Dorsolateral prefrontal cortex (tissue), 120 donors: ENCODE measurements at regions of chr15 and their contacts with region 1.

Region 1: GRCh38 chr15:33226559-33227181 is 32.2 kb upstream of the FMN1 start:
- DNase-seq: peak in 1 of 10 donors; percentile 11
- H3K4me3 ChIP-seq: no peak overlapping the region
- H3K27ac ChIP-seq: no peak overlapping the region
- H3K27me3 ChIP-seq: no peaks in the 10 kb centered on the region
- CTCF ChIP-seq: peak in 36 of 56 donors; percentile 7 to 54 (median 31)

Region 2: DNA sequence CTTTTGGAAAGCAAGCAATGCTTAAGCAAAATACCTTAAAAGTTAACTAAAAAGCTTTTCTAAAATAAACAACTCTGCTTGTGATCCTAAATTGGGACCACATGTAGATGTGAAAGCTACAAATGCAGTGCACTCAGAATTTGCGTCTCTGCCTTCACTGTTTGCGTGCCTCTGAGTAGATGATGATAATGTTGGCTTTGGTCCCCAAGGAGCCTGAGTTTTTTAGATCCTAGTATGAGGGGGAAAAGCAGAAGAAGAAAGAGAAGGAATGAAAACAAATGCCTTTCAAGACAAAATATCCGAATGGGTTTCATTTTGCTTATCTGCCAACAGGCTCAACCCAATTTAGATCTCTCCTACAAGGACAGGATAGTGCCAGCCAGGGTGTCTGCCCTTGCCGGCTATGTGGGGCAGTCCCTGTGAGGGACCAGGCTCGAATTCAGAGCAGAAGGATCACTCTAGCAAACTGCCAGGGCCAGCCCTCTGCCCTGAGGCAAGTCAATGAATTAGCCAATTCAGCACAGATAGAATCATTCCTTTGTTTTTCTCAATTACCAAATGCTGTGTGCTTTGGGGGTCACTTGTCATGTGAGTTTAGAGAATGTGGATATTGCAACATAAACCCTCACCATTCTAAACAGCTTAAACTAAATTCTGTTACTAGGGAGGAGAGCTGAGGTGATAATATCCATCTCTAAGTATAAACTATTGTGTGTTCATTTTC is 556.6 kb before region 1 on chr15:
- intact Hi-C with region 1: no loop called
- DNase-seq: peak in 9 of 10 donors; percentile 59 to 87 (median 78)
- H3K4me3 ChIP-seq: peak overlapping the region in 40 of 59 donors; percentile 0 to 55 (median 22)
- H3K27ac ChIP-seq: peak overlapping the region in 58 of 59 donors; percentile 61 to 99 (median 94)
- H3K27me3 ChIP-seq: no peaks in the 10 kb centered on the region
- CTCF ChIP-seq: peak in 10 of 56 donors; percentile 5 to 21 (median 16)

Region 3: DNA sequence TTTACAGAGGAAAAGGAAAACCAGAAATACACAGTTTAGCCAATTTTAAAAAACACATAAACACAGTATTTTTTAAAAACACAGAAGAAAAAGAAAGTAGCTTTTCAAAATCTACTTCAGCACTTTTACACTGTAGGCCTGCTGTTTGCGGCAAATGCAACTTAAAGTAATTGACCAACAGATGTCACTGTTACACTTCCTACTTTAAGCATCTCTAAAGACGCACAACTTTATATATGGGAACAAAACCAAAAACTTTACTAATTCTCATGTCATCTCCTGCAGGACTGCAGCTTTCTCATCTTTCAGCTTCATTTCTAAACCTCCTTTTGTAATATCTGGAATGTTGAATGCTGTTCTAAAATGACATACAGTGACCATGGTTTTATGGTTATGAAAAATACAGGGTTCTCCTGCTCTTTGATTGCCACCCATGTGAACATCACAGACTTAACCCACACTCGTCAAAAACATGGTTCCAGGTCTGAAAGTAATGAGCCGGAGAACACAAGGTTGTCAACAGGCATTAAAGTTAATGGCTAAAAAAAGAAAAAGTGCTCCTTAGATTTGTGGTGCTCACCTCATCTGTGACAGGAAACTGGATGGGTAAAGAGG is 140.1 kb before region 1 on chr15:
- intact Hi-C with region 1: loop called in 1 of 2 experiments (anchors 10 kb)
- DNase-seq: no peak
- H3K4me3 ChIP-seq: no peak overlapping the region
- H3K27ac ChIP-seq: no peak overlapping the region
- H3K27me3 ChIP-seq: no peaks in the 10 kb centered on the region
- CTCF ChIP-seq: peak; percentile 23 to 81 (median 65)